ENCODE measurements at regions of chr3 and their contacts with region 1.

Region 1: GRCh38 chr3:69212411-69213139 is 90.2 kb upstream of the LMOD3 start:
- DNase-seq: peak; percentile 17
- H3K4me3 Mint-ChIP-seq: no peak overlapping the region
- H3K27ac Mint-ChIP-seq: peak overlapping the region; percentile 56
- H3K4me1 Mint-ChIP-seq: peaks cover 36% of the 10 kb centered on the region
- H3K27me3 Mint-ChIP-seq: no peaks in the 10 kb centered on the region

Region 2: GRCh38 chr3:69178838-69179739 is 33.5 kb before region 1 on chr3:
- CTCF ChIA-PET with region 1: interaction called, 3 read pairs
- intact Hi-C with region 1: loop called (anchors 1 kb)
- DNase-seq: no peak
- H3K4me3 Mint-ChIP-seq: no peak overlapping the region
- H3K27ac Mint-ChIP-seq: no peak overlapping the region
- H3K4me1 Mint-ChIP-seq: peaks cover 23% of the 10 kb centered on the region
- H3K27me3 Mint-ChIP-seq: no peaks in the 10 kb centered on the region

Region 3: DNA sequence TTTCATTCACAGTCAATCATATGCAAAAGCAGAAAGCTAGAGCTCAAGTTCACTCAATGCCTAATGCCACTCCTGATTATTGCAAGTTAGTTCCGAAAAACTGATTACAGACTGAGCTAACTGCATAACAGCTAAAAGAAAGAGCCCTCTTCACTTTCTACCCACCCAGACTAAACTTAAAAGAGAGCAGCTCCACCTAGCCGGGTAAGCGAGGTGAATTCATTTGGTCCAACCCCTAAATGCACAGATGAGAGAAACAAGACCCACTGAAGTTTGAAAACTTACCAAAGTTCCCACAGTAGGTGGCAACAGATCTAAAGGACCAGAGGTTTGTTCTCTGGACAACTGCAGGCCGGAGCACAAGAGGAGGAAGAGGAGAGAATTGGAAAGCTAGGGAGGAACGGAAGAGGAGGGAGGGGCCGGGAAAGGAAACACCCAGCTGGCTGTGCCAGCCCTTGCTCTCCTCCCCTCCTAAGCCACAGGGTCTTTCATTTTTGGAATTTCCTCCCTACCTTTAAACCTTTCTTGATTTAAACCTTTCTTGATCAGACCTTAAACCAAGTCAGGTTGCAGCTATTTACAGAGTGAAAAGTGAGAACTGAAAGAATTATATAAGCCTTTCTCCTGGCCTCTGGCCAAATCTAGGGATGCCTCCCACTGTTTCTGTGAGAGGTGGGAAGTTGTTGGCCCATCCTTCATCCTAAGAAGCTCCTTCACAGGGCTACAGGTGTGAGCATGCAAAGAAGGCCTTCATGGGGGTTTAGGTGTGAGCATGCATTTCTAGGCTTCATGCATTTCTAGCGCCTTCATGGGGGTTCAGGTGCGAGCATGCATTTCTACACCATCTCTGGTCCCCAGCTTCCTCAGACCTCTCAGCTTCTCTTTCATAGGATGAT is 24.5 kb after region 1 on chr3:
- CTCF ChIA-PET with region 1: interaction called, 3 read pairs
- intact Hi-C with region 1: loop called (anchors 2 kb)
- DNase-seq: peak; percentile 17
- H3K4me3 Mint-ChIP-seq: peak overlapping the region; percentile 66
- H3K27ac Mint-ChIP-seq: peak overlapping the region; percentile 50
- H3K4me1 Mint-ChIP-seq: peaks cover 18% of the 10 kb centered on the region
- H3K27me3 Mint-ChIP-seq: no peaks in the 10 kb centered on the region

Region 4: DNA sequence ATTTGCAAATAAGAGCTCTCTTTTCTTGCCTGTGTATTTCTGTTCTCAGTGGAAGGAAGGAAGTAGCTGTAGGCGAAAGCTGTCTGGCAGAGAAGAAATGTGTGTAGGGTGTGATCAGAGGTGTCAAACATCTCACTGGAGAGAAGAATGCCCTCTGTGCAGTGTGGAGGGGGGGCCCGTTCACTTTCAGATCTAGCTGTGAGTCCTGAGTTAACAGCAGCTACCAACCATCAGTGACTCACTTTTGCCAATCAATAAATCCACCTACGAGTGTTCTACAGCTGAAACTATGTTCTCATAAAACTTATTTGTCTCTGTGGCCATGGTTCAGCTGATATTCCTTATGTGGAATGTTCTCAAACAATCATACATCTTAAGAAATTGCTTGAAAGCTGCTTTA is 69.6 kb after region 1 on chr3:
- CTCF ChIA-PET with region 1: no interaction called
- intact Hi-C with region 1: loop called (anchors 1 kb)
- DNase-seq: peak; percentile 84
- H3K4me3 Mint-ChIP-seq: no peak overlapping the region
- H3K27ac Mint-ChIP-seq: peak overlapping the region; percentile 33
- H3K4me1 Mint-ChIP-seq: peaks cover 21% of the 10 kb centered on the region
- H3K27me3 Mint-ChIP-seq: no peaks in the 10 kb centered on the region

Region 5: DNA sequence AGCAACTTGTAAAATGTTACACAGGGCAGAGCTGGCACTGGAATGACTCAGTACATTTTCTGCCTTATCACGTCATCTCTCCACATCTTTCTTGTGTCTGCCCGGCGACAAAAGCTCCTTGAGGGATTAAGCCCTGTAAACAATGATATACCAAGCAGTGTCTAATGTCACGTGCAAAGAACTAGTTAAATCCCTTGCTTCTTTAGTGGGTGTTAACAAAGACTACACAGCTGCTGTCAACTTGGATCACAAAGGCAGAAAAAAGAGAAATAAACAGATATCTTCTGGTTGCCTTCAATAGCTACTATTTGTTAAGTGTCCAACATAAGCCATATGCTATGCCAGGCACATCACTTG is 221.4 kb after region 1 on chr3:
- CTCF ChIA-PET with region 1: no interaction called
- intact Hi-C with region 1: loop called (anchors 1 kb)
- DNase-seq: peak; percentile 36
- H3K4me3 Mint-ChIP-seq: no peak overlapping the region
- H3K27ac Mint-ChIP-seq: peak overlapping the region; percentile 19
- H3K4me1 Mint-ChIP-seq: peaks cover 40% of the 10 kb centered on the region
- H3K27me3 Mint-ChIP-seq: peaks cover 3% of the 10 kb centered on the region

Measured in activated naive CD4-positive, alpha-beta T cell treated with anti-CD3 and anti-CD28 coated beads for 36 hours (primary cell).